PC-9 (cell line): ENCODE measurements at regions of chr6 and their contacts with region 1.

Region 1: GRCh38 chr6:140554421-140554820 is 1180.0 kb upstream of the CITED2 start:
- DNase-seq: peak in 1 of 2 experiments; percentile 81
- H3K4me3 ChIP-seq: no peak overlapping the region
- H3K27ac ChIP-seq: no peak overlapping the region
- H3K4me1 ChIP-seq: no peaks in the 10 kb centered on the region
- H3K27me3 ChIP-seq: no peaks in the 10 kb centered on the region
- CTCF ChIP-seq: no peak

Region 2: DNA sequence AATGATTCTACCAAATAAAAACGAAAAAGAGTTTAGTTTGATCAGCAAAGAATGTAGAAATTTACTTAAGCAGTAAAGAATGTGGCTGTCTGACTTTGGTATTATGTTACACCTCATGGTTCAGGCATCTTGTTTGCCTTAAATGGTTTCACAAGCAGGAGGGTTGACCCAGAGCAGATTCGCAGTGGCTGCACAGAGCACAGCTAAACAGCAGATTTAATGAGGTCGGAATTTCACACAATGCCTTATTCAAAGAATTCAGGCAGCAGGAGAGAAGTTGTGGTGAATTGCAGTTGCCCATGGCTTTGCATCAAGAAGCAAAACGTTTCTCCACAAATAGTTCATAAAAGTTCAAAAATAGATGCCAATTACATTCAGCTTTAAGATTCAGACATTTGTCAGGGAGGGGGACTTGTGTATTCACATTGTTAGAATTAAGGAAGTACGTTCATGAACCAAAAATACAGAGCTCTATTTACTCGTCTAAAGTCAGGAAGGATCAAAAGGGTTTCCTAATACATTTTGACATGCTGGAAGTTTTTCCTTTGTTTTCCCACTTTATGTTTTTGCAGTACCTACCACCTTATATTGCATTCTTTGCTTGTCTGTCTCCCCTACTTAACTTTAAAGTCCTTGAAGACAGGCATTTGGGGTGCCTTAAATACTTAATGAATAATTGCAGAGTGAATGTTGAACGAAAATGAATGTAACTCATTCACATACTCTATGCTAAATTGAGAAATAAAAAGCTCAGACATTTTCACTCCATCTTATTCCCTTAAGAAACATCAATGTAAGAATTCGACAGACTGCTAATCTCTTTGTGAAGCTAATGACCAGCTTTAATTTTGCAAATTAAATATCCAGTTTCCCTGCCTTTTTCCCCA is 16.4 kb before region 1 on chr6:
- CTCF ChIA-PET with region 1: no interaction called
- POLR2A ChIA-PET with region 1: no interaction called
- intact Hi-C with region 1: loop called (anchors 2 kb)
- DNase-seq: peak; percentile 63 to 87
- H3K4me3 ChIP-seq: peak overlapping the region; percentile 16; the same call in 1 of the 2 replicates
- H3K27ac ChIP-seq: peak overlapping the region; percentile 76
- H3K4me1 ChIP-seq: peaks cover 25% of the 10 kb centered on the region
- H3K27me3 ChIP-seq: no peaks in the 10 kb centered on the region
- CTCF ChIP-seq: no peak